Sigmoid colon (tissue), 7 donors: ENCODE measurements at regions of chr15 and their contacts with region 1.

Region 1: GRCh38 chr15:44222478-44222877 is 27.4 kb upstream of the FRMD5 start:
- DNase-seq: no peak
- H3K4me3 ChIP-seq: no peak overlapping the region
- H3K27ac ChIP-seq: no peak overlapping the region
- H3K4me1 ChIP-seq: no peaks in the 10 kb centered on the region
- H3K27me3 ChIP-seq: no peaks in the 10 kb centered on the region
- CTCF ChIP-seq: no peak
- EP300 ChIP-seq: no peak
- POLR2A ChIP-seq: no peak

Region 2: GRCh38 chr15:43872416-43873020 is 350.0 kb before region 1 on chr15:
- intact Hi-C with region 1: loop called (anchors 5 kb)
- DNase-seq: no peak
- H3K4me3 ChIP-seq: no peak overlapping the region
- H3K27ac ChIP-seq: no peak overlapping the region
- H3K4me1 ChIP-seq: peaks cover 0 to 9% (median 0%) of the 10 kb centered on the region in 4 donors
- H3K27me3 ChIP-seq: no peaks in the 10 kb centered on the region
- CTCF ChIP-seq: peak in 2 of 4 experiments; percentile 35 to 44
- EP300 ChIP-seq: no peak
- POLR2A ChIP-seq: no peak

Region 3: DNA sequence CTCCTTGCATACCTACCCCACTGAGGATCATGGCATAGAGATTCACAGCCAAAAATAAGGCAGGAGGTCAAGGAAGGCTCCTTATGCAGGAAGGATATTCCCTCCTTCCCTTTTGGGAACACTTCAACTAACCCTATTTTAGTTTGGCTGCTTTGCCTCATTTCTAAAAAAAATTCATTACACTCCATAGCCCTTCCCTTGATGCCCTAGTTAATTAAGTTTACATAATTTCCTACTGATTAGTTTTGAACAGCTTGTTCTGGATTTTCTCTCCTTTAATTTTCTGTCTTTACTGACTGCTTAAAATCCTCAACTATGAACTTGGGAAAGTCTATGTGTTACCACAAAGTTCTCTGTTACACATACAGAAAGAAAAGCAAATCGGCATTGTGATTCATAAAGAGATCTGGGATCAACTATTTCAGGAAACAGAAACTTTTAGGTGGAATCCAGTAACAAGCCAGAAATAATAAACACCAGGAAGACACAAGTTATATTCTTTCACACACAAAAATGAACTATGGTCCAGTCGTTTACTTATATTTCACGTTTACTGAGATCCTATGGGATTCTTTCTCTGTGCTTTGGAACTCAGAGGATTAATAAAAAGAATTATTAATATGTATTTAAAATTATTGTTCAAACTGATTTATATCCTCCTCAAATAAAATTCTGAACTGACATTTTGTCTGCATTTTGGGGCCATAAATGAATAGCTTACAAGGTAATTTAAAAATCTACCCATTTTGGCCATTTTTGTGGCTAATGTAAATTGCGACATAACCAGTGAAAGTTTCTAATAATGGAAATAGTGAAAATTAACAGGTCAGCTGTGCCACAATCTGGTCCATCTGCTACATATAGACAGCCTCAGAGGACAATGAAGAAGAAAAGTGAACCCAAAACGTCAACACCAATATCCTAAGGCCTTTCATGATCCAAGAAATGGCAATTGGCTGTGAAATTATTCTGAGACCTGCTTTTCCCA is 141.2 kb before region 1 on chr15:
- intact Hi-C with region 1: no loop called
- DNase-seq: no peak
- H3K4me3 ChIP-seq: no peak overlapping the region
- H3K27ac ChIP-seq: no peak overlapping the region
- H3K4me1 ChIP-seq: no peaks in the 10 kb centered on the region
- H3K27me3 ChIP-seq: no peaks in the 10 kb centered on the region
- CTCF ChIP-seq: no peak
- EP300 ChIP-seq: no peak
- POLR2A ChIP-seq: no peak